ENCODE measurements at regions of chr5 and their contacts with region 1.

Region 1: GRCh38 chr5:39376293-39376714 is 12.0 kb upstream of the C9 start:
- DNase-seq: no peak
- ATAC-seq: peak; percentile 92
- H3K4me3 ChIP-seq: no peak overlapping the region
- H3K27ac ChIP-seq: no peak overlapping the region
- H3K4me1 ChIP-seq: no peaks in the 10 kb centered on the region
- H3K27me3 ChIP-seq: no peaks in the 10 kb centered on the region
- CTCF ChIP-seq: peak; percentile 65 to 73 (median 68)
- EP300 ChIP-seq: no peak
- POLR2A ChIP-seq: no peak
- RAD21 ChIP-seq: peak; percentile 72

Region 2: GRCh38 chr5:39362646-39363045 is 13.7 kb before region 1 on chr5:
- CTCF ChIA-PET with region 1: interaction called, 12 read pairs
- POLR2A ChIA-PET with region 1: no interaction called
- RAD21 ChIA-PET with region 1: interaction called, 4 read pairs
- SMC1A ChIA-PET with region 1: interaction called, 3 read pairs
- in situ Hi-C with region 1: no loop called
- intact Hi-C with region 1: no loop called
- DNase-seq: no peak
- ATAC-seq: no peak
- H3K4me3 ChIP-seq: no peak overlapping the region
- H3K27ac ChIP-seq: no peak overlapping the region
- H3K4me1 ChIP-seq: no peaks in the 10 kb centered on the region
- H3K27me3 ChIP-seq: no peaks in the 10 kb centered on the region
- CTCF ChIP-seq: no peak
- EP300 ChIP-seq: no peak
- POLR2A ChIP-seq: no peak
- RAD21 ChIP-seq: no peak

Region 3: GRCh38 chr5:39547553-39548154 is 171.3 kb after region 1 on chr5:
- CTCF ChIA-PET with region 1: interaction called, 97 read pairs
- POLR2A ChIA-PET with region 1: no interaction called
- RAD21 ChIA-PET with region 1: interaction called, 47 read pairs
- SMC1A ChIA-PET with region 1: interaction called, 46 read pairs
- in situ Hi-C with region 1: no loop called
- intact Hi-C with region 1: loop called (anchors 1 kb)
- DNase-seq: no peak
- ATAC-seq: peak; percentile 36; the same call in 1 of the 3 replicates
- H3K4me3 ChIP-seq: no peak overlapping the region
- H3K27ac ChIP-seq: no peak overlapping the region
- H3K4me1 ChIP-seq: no peaks in the 10 kb centered on the region
- H3K27me3 ChIP-seq: peaks cover 0 to 4% of the 10 kb centered on the region in 2 experiments; a peak in 3 of 4 replicates
- CTCF ChIP-seq: peak; percentile 50 to 62 (median 59)
- EP300 ChIP-seq: no peak
- POLR2A ChIP-seq: no peak
- RAD21 ChIP-seq: peak; percentile 44

Region 4: DNA sequence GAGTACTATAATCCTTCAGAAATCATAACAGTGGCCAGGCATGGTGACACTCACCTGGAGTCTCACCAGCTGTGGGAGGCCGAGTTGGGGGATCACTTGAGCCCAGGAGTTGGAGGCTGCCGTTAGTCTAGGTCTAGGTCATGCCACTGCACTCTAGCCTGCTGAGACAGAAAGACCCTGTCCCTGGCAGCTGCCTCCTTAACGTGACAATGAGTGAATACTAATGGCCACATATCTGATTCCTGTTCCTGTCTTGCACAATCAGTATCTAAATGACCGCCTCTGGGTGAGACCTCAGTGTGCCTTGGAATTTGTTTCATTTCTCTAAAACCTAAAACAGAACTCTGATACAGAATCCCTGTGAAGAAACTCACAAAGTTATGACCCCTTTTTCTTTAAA is 179.5 kb after region 1 on chr5:
- CTCF ChIA-PET with region 1: interaction called, 6 read pairs
- POLR2A ChIA-PET with region 1: no interaction called
- RAD21 ChIA-PET with region 1: no interaction called
- SMC1A ChIA-PET with region 1: no interaction called
- in situ Hi-C with region 1: loop called (anchors 5 kb)
- intact Hi-C with region 1: no loop called
- DNase-seq: no peak
- ATAC-seq: no peak
- H3K4me3 ChIP-seq: no peak overlapping the region
- H3K27ac ChIP-seq: no peak overlapping the region
- H3K4me1 ChIP-seq: no peaks in the 10 kb centered on the region
- H3K27me3 ChIP-seq: no peaks in the 10 kb centered on the region; a peak in 1 of 4 replicates
- CTCF ChIP-seq: no peak
- EP300 ChIP-seq: no peak
- POLR2A ChIP-seq: no peak
- RAD21 ChIP-seq: no peak

Region 5: DNA sequence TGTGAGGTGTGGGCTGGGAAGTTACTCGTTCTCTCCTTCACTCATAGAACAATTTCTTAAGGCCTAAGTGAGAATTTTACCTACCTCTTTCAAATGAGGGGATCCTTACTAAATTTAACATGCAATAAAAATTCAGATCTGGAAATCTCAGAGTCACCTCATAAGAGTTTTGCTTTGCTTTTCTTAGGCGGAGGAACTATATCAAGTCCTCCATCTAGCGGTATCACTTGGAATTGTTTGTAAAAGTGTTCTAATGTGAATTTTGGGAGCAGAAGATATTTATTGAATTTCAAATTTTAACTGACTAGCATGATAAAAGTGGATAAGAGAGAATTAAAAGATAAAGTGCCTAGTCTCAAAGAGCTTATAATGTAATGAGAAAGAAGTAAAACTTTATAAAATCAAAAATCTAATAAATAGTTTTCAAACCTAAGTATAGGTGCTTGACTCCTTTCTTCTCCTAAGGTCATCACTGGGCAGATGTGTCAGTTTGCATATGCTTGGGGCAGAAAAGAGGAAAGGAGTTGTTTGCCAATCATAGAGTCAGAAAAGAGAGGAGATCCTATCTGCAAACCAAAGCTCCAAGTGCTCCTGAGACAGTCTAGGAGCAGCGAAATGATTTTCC is 194.2 kb after region 1 on chr5:
- CTCF ChIA-PET with region 1: interaction called, 56 read pairs
- POLR2A ChIA-PET with region 1: no interaction called
- RAD21 ChIA-PET with region 1: interaction called, 7 read pairs
- SMC1A ChIA-PET with region 1: interaction called, 8 read pairs
- in situ Hi-C with region 1: no loop called
- intact Hi-C with region 1: loop called (anchors 1 kb)
- DNase-seq: no peak
- ATAC-seq: peak; percentile 46; the same call in 1 of the 3 replicates
- H3K4me3 ChIP-seq: no peak overlapping the region
- H3K27ac ChIP-seq: no peak overlapping the region
- H3K4me1 ChIP-seq: no peaks in the 10 kb centered on the region
- H3K27me3 ChIP-seq: no peaks in the 10 kb centered on the region
- CTCF ChIP-seq: peak; percentile 32 to 47 (median 45); a peak in 5 of 6 replicates
- EP300 ChIP-seq: no peak
- POLR2A ChIP-seq: no peak
- RAD21 ChIP-seq: peak; percentile 46